ENCODE measurements at regions of chr21 and their contacts with region 1.

Region 1: DNA sequence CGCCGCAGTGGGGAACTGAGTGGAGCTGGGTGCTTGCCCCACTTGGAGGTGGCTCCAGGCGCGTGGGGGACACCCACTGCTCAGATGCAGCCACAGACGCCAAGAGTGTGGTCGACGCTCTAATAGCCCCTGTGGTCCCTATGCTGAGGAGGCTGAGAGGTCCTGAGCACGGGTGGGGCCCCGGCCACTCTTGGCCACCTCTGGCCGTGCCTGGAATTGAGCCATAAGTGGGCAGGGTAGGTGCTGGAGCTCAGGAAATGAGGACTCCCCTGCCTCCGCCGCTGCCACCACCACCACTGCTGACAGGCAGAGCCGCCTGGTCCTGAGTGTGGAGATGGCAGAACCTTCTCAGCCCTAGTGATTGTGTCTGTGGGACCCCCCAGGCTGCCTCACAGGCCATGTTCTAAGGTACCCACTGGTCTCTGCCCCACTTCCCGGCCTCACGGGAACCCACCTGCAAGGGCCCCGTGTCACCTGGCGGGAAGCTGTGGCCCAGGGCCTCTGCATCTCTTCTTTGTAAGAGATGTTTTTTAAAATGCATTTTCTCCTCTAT is 34.6 kb upstream of the DIP2A start:
- DNase-seq: peak in 8 of 10 donors; percentile 25 to 74 (median 50)
- ATAC-seq: peak; percentile 27 to 54
- H3K4me3 Mint-ChIP-seq: peak overlapping the region; percentile 72 to 92 (median 88)
- H3K27ac Mint-ChIP-seq: peak overlapping the region; percentile 94 to 100 (median 99)
- H3K4me1 Mint-ChIP-seq: peaks cover 13 to 46% (median 43%) of the 10 kb centered on the region in 4 donors
- H3K27me3 Mint-ChIP-seq: no peaks in the 10 kb centered on the region

Region 2: GRCh38 chr21:46434322-46434958 is 10.3 kb after region 1 on chr21:
- POLR2A ChIA-PET with region 1: interaction called, 65 read pairs
- DNase-seq: no peak
- ATAC-seq: no peak
- H3K4me3 Mint-ChIP-seq: peak overlapping the region in 8 of 10 donors; percentile 39 to 71 (median 50)
- H3K27ac Mint-ChIP-seq: peak overlapping the region; percentile 44 to 98 (median 81)
- H3K4me1 Mint-ChIP-seq: peaks cover 11 to 43% (median 30%) of the 10 kb centered on the region in 4 donors
- H3K27me3 Mint-ChIP-seq: no peaks in the 10 kb centered on the region

Region 3: DNA sequence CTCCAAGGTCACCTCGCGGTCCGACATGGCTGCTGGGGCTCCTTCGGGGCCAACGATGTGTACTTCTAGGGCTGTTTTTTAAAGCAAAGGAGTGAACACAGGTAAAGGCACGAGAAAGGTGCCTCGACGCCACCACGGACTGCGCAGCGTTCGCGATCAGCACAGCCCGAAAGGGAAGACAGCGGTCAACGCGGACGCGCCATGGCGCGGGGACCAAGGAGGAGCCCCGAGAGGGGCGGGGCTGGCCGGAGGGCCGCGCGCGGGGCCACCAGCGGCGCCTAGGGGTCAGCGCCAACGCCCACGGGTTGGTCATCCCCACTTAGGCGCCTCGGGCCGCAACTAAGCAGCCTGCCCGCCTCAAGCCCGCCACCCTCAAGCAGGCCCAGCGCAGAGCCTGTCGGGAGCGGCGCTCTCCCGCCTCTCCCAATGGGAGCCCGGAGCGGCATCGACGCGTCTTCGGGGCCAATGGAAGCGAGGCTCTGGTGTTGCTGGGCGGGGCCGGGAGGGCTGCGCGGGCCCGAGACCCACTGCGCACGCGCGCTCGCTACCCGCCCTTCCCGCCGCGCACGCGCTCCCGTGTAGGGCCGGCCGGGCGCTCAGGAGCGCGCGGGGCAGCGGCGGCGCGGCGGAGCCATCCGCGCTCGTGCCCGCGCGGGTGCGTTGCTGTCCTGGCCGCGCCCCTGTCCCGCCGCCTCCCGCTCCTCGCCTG is 34.4 kb after region 1 on chr21 and contains the start of gene DIP2A:
- POLR2A ChIA-PET with region 1: interaction called, 41 read pairs
- DNase-seq: peak; percentile 85 to 98 (median 94)
- ATAC-seq: peak; percentile 96 to 97
- H3K4me3 Mint-ChIP-seq: peak within 1 kb of the TSS; percentile 89 to 97 (median 92)
- H3K27ac Mint-ChIP-seq: peak within 1 kb of the TSS; percentile 78 to 98 (median 96)
- H3K4me1 Mint-ChIP-seq: peaks cover 21 to 67% (median 58%) of the 10 kb centered on the region in 4 donors
- H3K27me3 Mint-ChIP-seq: no peaks in the 10 kb centered on the region
- polyA plus RNA-seq, gene DIP2A: 26.8 to 33.6 (median 28.6) TPM